Sigmoid colon (tissue), 7 donors: ENCODE measurements at regions of chr5 and their contacts with region 1.

Region 1: DNA sequence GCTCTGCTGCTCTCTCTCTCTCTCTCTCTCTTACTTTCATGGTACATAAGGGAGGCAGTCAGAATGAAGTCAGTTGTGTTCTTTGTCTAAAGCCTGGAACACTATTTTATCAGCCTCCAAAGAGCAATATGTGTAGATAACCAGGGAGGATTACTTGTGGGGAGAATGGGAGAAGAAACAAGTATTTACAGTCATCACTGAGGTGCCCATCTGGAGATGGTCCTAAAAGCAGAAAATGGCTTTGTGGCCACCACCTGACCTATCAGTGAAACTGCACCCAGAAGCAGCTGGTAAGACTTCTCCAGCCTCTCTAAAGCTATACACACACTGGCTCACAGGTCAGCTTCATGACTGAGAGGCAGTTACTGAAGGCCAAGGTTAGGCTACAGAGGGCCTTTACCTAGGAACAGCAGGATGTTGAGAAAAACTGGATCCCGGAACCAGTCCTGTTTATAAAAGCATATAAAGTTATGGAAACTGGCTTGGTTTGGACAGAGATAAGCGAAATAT is 75.1 kb downstream of the MRPS27 start:
- DNase-seq: no peak
- H3K4me3 ChIP-seq: no peak overlapping the region
- H3K27ac ChIP-seq: peak overlapping the region; percentile 72 to 83 (median 76)
- H3K4me1 ChIP-seq: peaks cover 0 to 70% (median 56%) of the 10 kb centered on the region in 4 donors
- H3K27me3 ChIP-seq: no peaks in the 10 kb centered on the region
- CTCF ChIP-seq: peak in 1 of 4 experiments; percentile 19
- EP300 ChIP-seq: no peak
- POLR2A ChIP-seq: no peak

Region 2: GRCh38 chr5:71782771-71783770 is 461.8 kb before region 1 on chr5:
- intact Hi-C with region 1: loop called (anchors 1 kb)
- DNase-seq: peak; percentile 91
- H3K4me3 ChIP-seq: peak overlapping the region in 3 of 4 donors; percentile 22 to 39 (median 32)
- H3K27ac ChIP-seq: peak overlapping the region; percentile 58 to 71 (median 66)
- H3K4me1 ChIP-seq: peaks cover 0 to 16% (median 11%) of the 10 kb centered on the region in 4 donors
- H3K27me3 ChIP-seq: no peaks in the 10 kb centered on the region
- CTCF ChIP-seq: peak; percentile 80 to 86 (median 83)
- EP300 ChIP-seq: no peak
- POLR2A ChIP-seq: no peak

Region 3: DNA sequence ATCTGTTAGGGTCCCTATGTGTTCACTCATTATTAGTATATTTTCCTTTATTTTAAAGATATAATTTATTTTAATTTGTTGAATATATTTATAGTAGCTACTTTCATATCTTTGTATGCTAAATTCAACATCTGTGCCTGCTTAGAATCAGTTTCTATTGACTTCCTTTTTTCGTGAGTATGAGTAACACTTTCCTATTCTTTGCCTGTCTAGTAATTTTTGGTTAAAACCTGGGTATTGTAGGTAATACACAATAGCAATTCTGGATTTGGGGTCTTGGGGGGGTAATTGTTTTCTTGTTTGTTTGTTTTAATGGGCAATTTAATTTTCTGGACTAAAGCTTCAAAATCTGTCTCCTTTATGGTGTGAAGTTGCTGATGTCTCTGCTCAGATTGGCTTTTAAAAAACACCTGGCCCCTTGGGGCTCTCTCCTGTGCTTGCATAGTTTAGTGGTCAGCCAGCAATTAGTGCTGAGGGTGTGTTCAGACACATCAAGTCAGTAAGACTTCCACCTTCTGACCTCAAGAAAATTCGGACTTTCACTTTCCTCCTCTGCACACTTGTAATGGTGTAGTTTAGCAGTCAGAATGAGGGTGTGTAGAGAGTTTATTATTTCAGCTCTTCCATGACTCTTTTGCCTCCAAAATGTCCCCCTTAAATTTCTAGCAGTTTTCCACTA is 262.1 kb before region 1 on chr5:
- intact Hi-C with region 1: no loop called
- DNase-seq: no peak
- H3K4me3 ChIP-seq: no peak overlapping the region
- H3K27ac ChIP-seq: no peak overlapping the region
- H3K4me1 ChIP-seq: no peaks in the 10 kb centered on the region
- H3K27me3 ChIP-seq: no peaks in the 10 kb centered on the region
- CTCF ChIP-seq: no peak
- EP300 ChIP-seq: no peak
- POLR2A ChIP-seq: no peak

Region 4: GRCh38 chr5:72108202-72109061 is 136.5 kb before region 1 on chr5:
- intact Hi-C with region 1: loop called (anchors 5 kb)
- DNase-seq: peak; percentile 85
- H3K4me3 ChIP-seq: peak overlapping the region; percentile 68 to 89 (median 79)
- H3K27ac ChIP-seq: peak overlapping the region; percentile 75 to 87 (median 82)
- H3K4me1 ChIP-seq: peaks cover 0 to 32% (median 19%) of the 10 kb centered on the region in 4 donors
- H3K27me3 ChIP-seq: no peaks in the 10 kb centered on the region
- CTCF ChIP-seq: no peak
- EP300 ChIP-seq: no peak
- POLR2A ChIP-seq: peak in 1 of 2 donors; percentile 23

Region 5: DNA sequence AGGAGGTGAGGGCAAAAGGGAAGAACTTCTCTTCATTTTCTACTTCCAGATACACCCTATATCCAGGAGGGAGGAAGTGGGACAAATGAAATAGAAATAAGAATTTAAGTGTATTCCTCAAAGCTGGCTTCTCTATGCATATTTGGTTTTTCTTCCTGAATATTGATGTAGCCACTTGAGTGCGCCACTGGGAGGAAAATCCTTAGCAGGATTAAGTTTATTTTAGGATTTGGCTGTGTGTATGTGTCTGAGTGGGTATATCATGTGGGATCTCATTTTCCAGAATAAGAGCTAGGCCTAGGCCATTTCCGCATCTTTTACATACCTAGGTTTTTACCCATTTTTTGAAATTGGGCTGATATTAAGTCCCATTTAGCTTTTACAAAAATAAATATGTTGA is 95.2 kb before region 1 on chr5:
- intact Hi-C with region 1: loop called (anchors 5 kb)
- DNase-seq: no peak
- H3K4me3 ChIP-seq: no peak overlapping the region
- H3K27ac ChIP-seq: peak overlapping the region; percentile 27 to 85 (median 72)
- H3K4me1 ChIP-seq: peaks cover 0 to 94% (median 45%) of the 10 kb centered on the region in 4 donors
- H3K27me3 ChIP-seq: no peaks in the 10 kb centered on the region
- CTCF ChIP-seq: no peak
- EP300 ChIP-seq: no peak
- POLR2A ChIP-seq: no peak

Region 6: GRCh38 chr5:72280581-72281170 is 35.8 kb after region 1 on chr5:
- intact Hi-C with region 1: loop called (anchors 5 kb)
- DNase-seq: no peak
- H3K4me3 ChIP-seq: no peak overlapping the region
- H3K27ac ChIP-seq: peak overlapping the region; percentile 58 to 81 (median 66)
- H3K4me1 ChIP-seq: peaks cover 0 to 45% (median 40%) of the 10 kb centered on the region in 4 donors
- H3K27me3 ChIP-seq: no peaks in the 10 kb centered on the region
- CTCF ChIP-seq: peak; percentile 28 to 56 (median 42)
- EP300 ChIP-seq: no peak
- POLR2A ChIP-seq: no peak